SK-N-SH (cell line): ENCODE measurements at regions of chr2 and their contacts with region 1.

Region 1: GRCh38 chr2:112481050-112481527 is 867 bp upstream of the TTL start:
- DNase-seq: peak; percentile 89
- H3K4me3 ChIP-seq: peak overlapping the region; percentile 81 to 89
- H3K27ac ChIP-seq: peak overlapping the region; percentile 75 to 90
- H3K4me1 ChIP-seq: peaks cover 13 to 17% of the 10 kb centered on the region in 2 experiments; a peak in 3 of 4 replicates
- H3K27me3 ChIP-seq: no peaks in the 10 kb centered on the region
- CTCF ChIP-seq: peak; percentile 76
- EP300 ChIP-seq: no peak
- RAD21 ChIP-seq: peak; percentile 80

Region 2: DNA sequence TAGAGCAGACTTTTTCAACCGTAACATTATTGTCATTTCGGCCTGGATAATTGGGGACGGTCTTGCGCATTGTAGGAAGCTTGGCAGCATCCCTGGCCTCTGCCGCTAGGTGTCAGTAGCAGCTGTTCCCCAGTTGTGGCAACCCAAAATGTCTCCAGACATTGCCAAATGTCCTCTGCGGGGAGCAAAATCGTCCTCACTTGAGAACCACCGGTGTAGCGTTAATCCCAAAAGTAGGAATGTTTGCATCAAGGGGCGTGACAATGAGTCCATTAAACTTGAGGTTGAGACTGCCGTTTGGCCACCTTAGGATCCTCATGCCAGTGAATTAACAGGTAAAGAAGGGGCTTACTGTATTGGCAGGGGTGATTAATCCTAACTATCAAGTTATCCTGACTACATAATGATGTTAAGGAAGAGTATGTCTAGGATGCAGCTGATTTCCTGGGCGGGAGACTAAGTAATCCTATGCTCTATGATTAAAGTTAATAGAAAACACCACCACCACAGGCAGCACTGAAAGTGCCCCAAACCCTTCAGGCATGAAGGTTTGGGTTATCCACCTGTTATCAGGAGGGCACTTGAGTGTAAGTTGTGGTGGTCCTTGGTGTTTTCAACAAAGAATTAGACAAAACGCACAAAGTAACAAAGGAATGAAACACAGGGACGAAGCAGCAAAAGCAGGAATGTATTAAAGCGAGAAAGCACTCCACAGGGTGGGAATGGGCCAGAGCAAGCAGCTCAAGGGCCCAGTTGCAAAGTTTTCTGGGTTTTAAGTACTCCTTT is 221.4 kb before region 1 on chr2:
- CTCF ChIA-PET with region 1: interaction called, 15 read pairs
- POLR2A ChIA-PET with region 1: no interaction called
- DNase-seq: peak; percentile 70
- H3K4me3 ChIP-seq: peak overlapping the region; percentile 21 to 42; a peak in 2 of 4 replicates
- H3K27ac ChIP-seq: no peak overlapping the region
- H3K4me1 ChIP-seq: peaks cover 3 to 4% of the 10 kb centered on the region in 2 experiments; a peak in 2 of 4 replicates
- H3K27me3 ChIP-seq: no peaks in the 10 kb centered on the region
- CTCF ChIP-seq: peak; percentile 97
- EP300 ChIP-seq: no peak
- RAD21 ChIP-seq: peak; percentile 90

Region 3: DNA sequence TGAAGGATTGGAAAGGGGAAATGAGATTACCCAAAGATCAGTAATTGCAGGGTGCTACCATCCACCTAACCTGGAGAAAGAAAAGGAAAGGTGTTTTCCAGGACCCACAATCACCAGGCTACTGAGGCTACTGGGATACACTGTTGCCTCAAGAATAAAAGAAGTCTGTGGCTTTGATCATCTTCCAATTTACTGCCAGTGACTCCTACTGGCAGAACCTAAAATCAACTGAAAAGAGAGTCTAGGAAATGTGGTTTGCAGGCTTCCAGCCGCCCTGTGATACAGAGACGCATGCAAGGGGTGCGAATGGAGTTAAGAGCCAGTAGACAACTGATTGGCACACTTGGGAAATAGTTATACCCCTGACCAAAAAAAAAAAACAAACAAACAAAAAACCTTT is 15.7 kb before region 1 on chr2:
- CTCF ChIA-PET with region 1: interaction called, 22 read pairs
- POLR2A ChIA-PET with region 1: no interaction called
- DNase-seq: peak; percentile 20
- H3K4me3 ChIP-seq: no peak overlapping the region
- H3K27ac ChIP-seq: no peak overlapping the region
- H3K4me1 ChIP-seq: no peaks in the 10 kb centered on the region
- H3K27me3 ChIP-seq: no peaks in the 10 kb centered on the region
- CTCF ChIP-seq: peak; percentile 34
- EP300 ChIP-seq: no peak
- RAD21 ChIP-seq: no peak

Region 4: DNA sequence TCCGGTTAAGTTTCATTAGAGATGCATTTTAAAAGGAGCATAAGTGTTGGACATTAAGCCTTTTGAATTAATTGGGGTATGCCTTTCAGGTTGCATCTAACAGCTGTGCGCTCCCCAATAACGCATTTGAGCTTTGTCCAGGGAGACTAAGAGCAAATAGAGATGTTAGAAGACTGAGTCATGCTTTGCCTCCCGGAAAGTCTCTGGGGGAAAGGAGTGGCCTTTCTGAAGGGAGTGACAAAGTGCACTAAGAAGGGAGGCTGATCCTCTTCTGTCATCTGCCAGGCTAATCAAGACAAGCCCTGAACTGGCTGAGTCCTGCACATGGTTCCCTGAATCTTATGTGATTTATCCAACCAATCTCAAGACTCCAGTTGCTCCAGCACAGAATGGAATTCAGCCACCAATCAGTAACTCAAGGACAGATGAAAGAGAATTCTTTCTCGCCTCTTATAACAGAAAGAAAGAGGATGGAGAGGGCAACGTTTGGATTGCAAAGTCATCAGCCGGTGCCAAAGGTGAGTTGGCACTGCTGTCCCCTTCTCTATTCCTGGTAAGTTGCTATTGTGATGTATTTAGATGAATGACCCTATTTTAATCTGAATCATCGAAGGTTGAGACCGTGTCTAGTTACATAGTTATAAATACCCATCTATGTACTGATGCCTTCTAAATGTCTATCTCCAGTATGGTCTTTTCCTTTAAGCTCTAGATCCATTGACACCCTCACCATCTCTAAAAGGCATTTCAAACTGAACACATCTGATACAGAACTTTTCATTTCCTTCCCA is 13.0 kb after region 1 on chr2:
- CTCF ChIA-PET with region 1: interaction called, 11 read pairs
- POLR2A ChIA-PET with region 1: interaction called, 3 read pairs
- DNase-seq: no peak
- H3K4me3 ChIP-seq: peak overlapping the region; percentile 27 to 28; a peak in 3 of 4 replicates
- H3K27ac ChIP-seq: peak overlapping the region; percentile 73 to 95
- H3K4me1 ChIP-seq: peaks cover 20 to 28% of the 10 kb centered on the region in 2 experiments
- H3K27me3 ChIP-seq: no peaks in the 10 kb centered on the region
- CTCF ChIP-seq: no peak
- EP300 ChIP-seq: no peak; a peak in 1 of 4 replicates
- RAD21 ChIP-seq: no peak

Region 5: DNA sequence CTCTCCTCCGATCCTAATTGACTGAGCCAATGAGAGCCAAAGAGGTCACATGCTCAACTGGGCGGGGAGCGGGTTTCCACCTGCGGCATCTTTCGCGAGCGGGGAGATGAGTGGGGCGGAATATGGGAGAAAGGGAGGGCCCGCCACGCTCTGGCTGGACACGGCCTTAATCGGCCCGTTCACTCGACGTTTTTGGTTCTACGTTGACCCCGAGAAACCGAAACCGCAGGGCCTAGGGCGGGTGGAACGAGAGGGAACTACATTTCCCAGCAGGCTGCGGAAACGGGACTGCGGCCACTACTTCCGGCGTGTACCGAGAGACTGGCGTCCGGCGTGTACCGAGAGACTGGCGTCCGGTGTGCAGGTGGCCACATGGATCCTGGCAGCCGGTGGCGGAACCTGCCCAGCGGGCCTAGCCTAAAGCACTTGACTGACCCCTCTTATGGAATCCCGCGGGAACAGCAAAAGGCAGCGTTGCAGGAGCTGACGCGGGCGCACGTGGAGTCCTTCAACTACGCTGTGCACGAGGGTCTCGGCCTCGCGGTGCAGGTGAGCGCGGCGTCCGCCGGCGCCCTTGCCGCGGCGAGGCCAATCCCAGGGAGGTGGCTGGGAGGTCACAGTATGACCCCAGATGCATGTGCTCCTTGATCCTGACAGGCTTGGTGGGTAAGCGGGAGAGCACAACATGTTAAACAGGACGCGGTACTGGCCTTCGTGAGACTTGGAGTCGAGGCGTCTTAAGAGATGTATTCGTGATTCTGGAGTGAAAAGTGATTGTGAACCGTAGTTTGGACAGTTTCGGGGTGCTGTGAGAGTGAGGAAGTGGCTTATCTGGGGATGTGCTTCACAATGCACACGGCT is 61.3 kb after region 1 on chr2 and contains the start of gene POLR1B:
- CTCF ChIA-PET with region 1: interaction called, 15 read pairs
- POLR2A ChIA-PET with region 1: no interaction called
- DNase-seq: peak; percentile 87
- H3K4me3 ChIP-seq: peak within 1 kb of the TSS; percentile 97 to 99
- H3K27ac ChIP-seq: peak within 1 kb of the TSS; percentile 79 to 98
- H3K4me1 ChIP-seq: peaks cover 3 to 5% of the 10 kb centered on the region in 2 experiments; a peak in 2 of 4 replicates
- H3K27me3 ChIP-seq: no peaks in the 10 kb centered on the region
- CTCF ChIP-seq: no peak
- EP300 ChIP-seq: no peak
- RAD21 ChIP-seq: no peak
- polyA plus RNA-seq, gene POLR1B: 13.4 and 19.1 TPM in 2 replicates

Region 6: GRCh38 chr2:112584134-112584890 is 103.2 kb after region 1 on chr2 and contains the start of gene CHCHD5:
- CTCF ChIA-PET with region 1: interaction called, 17 read pairs
- POLR2A ChIA-PET with region 1: interaction called, 6 read pairs
- DNase-seq: peak; percentile 87
- H3K4me3 ChIP-seq: peak within 1 kb of the TSS; percentile 78 to 83
- H3K27ac ChIP-seq: peak within 1 kb of the TSS; percentile 97 to 98
- H3K4me1 ChIP-seq: peaks cover 12 to 31% of the 10 kb centered on the region in 2 experiments; a peak in 3 of 4 replicates
- H3K27me3 ChIP-seq: no peaks in the 10 kb centered on the region
- CTCF ChIP-seq: 0 out of 2 replicates have a peak, but pooled peaks have one; percentile 6
- EP300 ChIP-seq: no peak; a peak in 1 of 4 replicates
- RAD21 ChIP-seq: no peak
- polyA plus RNA-seq, gene CHCHD5: 29.9 and 55.9 TPM in 2 replicates

Region 7: DNA sequence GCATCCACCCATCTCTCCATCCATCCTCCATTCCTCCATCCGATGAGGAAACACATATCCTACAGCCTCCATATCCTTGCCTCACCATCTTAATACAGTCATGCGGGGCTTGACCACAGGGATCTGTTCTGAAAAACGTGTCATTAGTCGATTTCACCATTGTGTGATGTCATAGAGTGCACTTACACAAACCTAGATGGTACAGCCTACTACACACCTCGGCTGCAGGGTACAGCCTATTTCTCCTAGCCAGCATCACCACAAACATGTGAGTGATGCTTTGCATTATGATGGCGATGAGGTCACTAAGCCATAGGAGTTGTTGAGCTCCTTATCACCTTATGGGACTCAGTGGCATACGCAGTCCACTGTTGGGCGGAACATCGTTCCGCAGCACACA is 237.8 kb after region 1 on chr2:
- CTCF ChIA-PET with region 1: no interaction called
- POLR2A ChIA-PET with region 1: no interaction called
- DNase-seq: no peak
- H3K4me3 ChIP-seq: no peak overlapping the region
- H3K27ac ChIP-seq: no peak overlapping the region
- H3K4me1 ChIP-seq: no peaks in the 10 kb centered on the region
- H3K27me3 ChIP-seq: no peaks in the 10 kb centered on the region; the same call in 1 of the 2 replicates
- CTCF ChIP-seq: no peak
- EP300 ChIP-seq: no peak
- RAD21 ChIP-seq: no peak